GM12878 (cell line): ENCODE measurements at regions of chr3 and their contacts with region 1.

Region 1: GRCh38 chr3:45612918-45613602 is 18.5 kb downstream of the LIMD1 start:
- DNase-seq: peak; percentile 91
- ATAC-seq: peak; percentile 85
- H3K4me3 ChIP-seq: peak overlapping the region; percentile 15; the same call in 1 of the 2 replicates
- H3K27ac ChIP-seq: peak overlapping the region; percentile 63
- H3K4me1 ChIP-seq: peaks cover 45% of the 10 kb centered on the region
- H3K27me3 ChIP-seq: no peaks in the 10 kb centered on the region
- CTCF ChIP-seq: no peak
- EP300 ChIP-seq: peak; percentile 39 to 62; a peak in 1 of 4 replicates
- POLR2A ChIP-seq: no peak
- RAD21 ChIP-seq: peak; percentile 33

Region 2: GRCh38 chr3:45528429-45528828 is 84.6 kb before region 1 on chr3:
- CTCF ChIA-PET with region 1: interaction called, 3 read pairs
- POLR2A ChIA-PET with region 1: interaction called, 3 read pairs
- RAD21 ChIA-PET with region 1: no interaction called
- SMC1A ChIA-PET with region 1: no interaction called
- in situ Hi-C with region 1: no loop called
- intact Hi-C with region 1: loop called (anchors 5 kb)
- DNase-seq: no peak
- ATAC-seq: no peak
- H3K4me3 ChIP-seq: no peak overlapping the region
- H3K27ac ChIP-seq: no peak overlapping the region
- H3K4me1 ChIP-seq: no peaks in the 10 kb centered on the region
- H3K27me3 ChIP-seq: no peaks in the 10 kb centered on the region
- CTCF ChIP-seq: no peak
- EP300 ChIP-seq: no peak
- POLR2A ChIP-seq: no peak
- RAD21 ChIP-seq: no peak

Region 3: GRCh38 chr3:45553996-45554666 is 58.9 kb before region 1 on chr3:
- CTCF ChIA-PET with region 1: interaction called, 5 read pairs
- POLR2A ChIA-PET with region 1: interaction called, 6 read pairs
- RAD21 ChIA-PET with region 1: interaction called, 4 read pairs
- SMC1A ChIA-PET with region 1: interaction called, 10 read pairs
- in situ Hi-C with region 1: no loop called
- intact Hi-C with region 1: no loop called
- DNase-seq: peak; percentile 68
- ATAC-seq: peak; percentile 78
- H3K4me3 ChIP-seq: no peak overlapping the region
- H3K27ac ChIP-seq: peak overlapping the region; percentile 55
- H3K4me1 ChIP-seq: peaks cover 33% of the 10 kb centered on the region
- H3K27me3 ChIP-seq: no peaks in the 10 kb centered on the region
- CTCF ChIP-seq: no peak
- EP300 ChIP-seq: peak; percentile 82 to 84; a peak in 3 of 4 replicates
- POLR2A ChIP-seq: no peak
- RAD21 ChIP-seq: no peak

Region 4: DNA sequence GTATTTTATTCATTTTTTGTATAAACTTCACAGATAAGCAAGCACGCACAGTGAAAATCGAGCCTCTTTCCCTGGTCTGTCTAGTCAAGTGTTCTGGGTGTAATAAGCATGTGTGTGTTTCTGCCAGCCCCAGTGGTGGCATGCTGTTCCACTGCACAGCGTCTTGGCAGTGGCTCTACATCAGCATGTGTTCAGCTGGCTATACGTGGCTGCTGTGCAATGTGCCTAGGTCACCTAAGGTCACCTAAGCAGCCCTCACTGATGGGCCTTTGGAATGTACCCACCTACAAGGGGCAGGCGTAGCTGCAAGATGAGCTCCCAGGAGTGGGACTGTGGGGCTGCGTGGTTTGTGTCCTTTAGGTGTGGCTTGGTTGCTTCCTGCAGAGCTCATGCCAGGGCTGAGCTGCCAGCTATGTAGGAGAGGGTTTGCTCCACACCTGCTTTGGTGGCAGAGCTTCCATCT is 13.6 kb before region 1 on chr3:
- CTCF ChIA-PET with region 1: interaction called, 17 read pairs
- POLR2A ChIA-PET with region 1: interaction called, 9 read pairs
- RAD21 ChIA-PET with region 1: interaction called, 69 read pairs
- SMC1A ChIA-PET with region 1: interaction called, 56 read pairs
- in situ Hi-C with region 1: no loop called
- intact Hi-C with region 1: loop called (anchors 1 kb)
- DNase-seq: no peak
- ATAC-seq: no peak
- H3K4me3 ChIP-seq: peak overlapping the region; percentile 68
- H3K27ac ChIP-seq: no peak overlapping the region
- H3K4me1 ChIP-seq: peaks cover 19% of the 10 kb centered on the region
- H3K27me3 ChIP-seq: no peaks in the 10 kb centered on the region
- CTCF ChIP-seq: no peak
- EP300 ChIP-seq: no peak
- POLR2A ChIP-seq: peak; percentile 52; the same call in 1 of the 2 replicates
- RAD21 ChIP-seq: no peak

Region 5: GRCh38 chr3:46135475-46135874 is 522.4 kb after region 1 on chr3:
- CTCF ChIA-PET with region 1: no interaction called
- POLR2A ChIA-PET with region 1: no interaction called
- RAD21 ChIA-PET with region 1: no interaction called
- SMC1A ChIA-PET with region 1: no interaction called
- in situ Hi-C with region 1: no loop called
- intact Hi-C with region 1: no loop called
- DNase-seq: no peak
- ATAC-seq: no peak
- H3K4me3 ChIP-seq: no peak overlapping the region
- H3K27ac ChIP-seq: no peak overlapping the region
- H3K4me1 ChIP-seq: no peaks in the 10 kb centered on the region; the same call in 1 of the 2 replicates
- H3K27me3 ChIP-seq: no peaks in the 10 kb centered on the region
- CTCF ChIP-seq: no peak
- EP300 ChIP-seq: no peak
- POLR2A ChIP-seq: no peak
- RAD21 ChIP-seq: no peak